Right ventricle myocardium superior (tissue), 1 donor: ENCODE measurements at regions of chr20 and their contacts with region 1.

Region 1: GRCh38 chr20:19205977-19206396 is 6.5 kb upstream of the SLC24A3 start:
- DNase-seq: peak; percentile 85
- ATAC-seq: peak; percentile 83

Region 2: GRCh38 chr20:19125508-19125907 is 80.5 kb before region 1 on chr20:
- intact Hi-C with region 1: no loop called
- DNase-seq: no peak
- ATAC-seq: no peak

Region 3: DNA sequence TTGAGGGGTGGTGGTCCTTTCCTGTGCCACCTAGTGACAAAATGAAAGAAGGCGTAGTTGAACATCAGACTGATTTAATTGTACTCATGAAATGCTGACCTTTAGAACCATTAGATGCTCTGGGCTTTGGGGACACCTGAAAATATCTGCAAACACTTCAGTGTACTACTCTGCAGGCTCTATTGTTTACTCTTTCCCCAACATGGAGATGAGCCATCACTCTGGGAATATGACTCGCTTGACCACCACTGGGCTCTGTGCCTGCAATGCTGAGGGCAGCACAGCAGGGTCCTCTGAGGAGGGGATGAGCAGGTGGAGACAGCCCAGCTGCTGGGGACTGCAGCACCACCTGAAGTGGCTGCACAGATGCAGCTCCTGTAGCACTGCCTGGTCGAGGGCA is 68.3 kb before region 1 on chr20:
- intact Hi-C with region 1: no loop called
- DNase-seq: no peak
- ATAC-seq: no peak

Region 4: DNA sequence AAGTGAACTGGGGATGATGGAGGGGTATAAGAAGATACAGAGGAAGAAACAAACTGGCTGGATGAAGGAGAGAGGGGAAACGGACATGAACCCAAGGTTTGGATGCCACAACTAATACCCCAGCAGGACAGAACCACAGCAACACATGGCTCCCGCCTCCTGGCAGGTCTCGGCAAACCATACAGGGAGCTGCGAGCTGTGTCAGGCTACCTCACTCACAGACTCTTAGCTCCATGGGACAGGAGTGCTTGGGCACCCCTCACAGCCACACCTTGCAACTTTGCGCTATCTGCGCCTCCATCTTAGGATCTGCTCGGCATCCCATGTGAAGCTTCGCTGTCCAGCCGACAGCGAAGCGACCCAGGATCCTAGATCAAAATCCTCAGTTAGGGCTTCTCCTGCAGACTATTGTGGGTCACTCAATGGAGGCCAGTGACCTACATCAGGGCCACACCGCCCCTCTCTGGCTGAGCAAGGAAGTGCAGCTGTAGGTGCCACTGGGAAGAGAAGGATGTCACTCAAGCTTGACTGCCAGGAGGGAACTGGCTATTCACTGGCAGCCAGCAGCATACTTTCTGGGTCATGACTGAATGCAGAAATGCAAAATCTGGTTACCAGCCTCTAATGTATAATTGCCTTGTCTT is 377.7 kb after region 1 on chr20:
- intact Hi-C with region 1: loop called (anchors 5 kb)
- DNase-seq: peak; percentile 79
- ATAC-seq: peak; percentile 93

Region 5: DNA sequence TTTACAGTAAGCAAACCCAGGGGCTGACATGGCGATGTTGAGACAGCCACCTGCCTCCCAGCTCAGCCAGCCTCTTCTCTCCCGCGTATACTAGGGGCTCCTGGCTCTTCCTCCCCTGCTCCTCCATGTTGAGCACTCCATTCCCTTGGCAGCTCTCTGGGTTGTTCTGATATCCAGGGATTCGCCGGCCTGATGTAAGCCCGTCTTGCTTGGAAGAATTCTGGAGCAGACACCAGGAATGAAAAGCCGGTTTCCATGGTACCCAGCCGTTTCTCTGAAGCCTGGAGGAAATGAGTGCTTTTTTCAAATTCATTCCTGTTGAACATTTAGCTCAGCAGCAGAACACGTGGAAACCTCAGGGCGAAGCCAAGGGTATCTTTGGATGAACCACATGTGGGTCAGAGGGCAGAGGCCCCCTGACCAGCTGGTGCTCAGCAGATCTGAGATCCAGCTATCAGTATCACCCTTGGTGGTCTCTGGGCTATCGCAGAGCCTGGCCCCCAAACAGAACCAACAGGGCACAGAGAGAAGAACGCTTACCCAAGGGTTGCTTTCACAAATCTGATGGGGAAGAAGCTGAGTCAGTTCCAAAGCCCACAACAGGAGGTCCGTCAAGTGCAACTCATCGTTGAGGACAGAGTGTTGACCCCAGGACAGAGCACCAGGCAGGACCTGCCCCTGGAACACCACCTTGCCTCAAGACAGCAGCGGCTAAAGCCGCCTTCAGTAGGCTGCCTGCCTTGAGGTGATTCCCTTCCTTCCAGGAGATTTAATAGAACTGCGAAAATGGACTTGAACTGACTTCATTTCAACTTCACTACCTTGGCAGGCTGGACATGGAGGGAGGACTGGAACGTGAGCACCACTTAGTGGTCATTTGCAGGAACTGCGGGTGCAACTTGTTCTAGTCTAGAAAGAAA is 456.0 kb after region 1 on chr20:
- intact Hi-C with region 1: loop called (anchors 5 kb)
- DNase-seq: peak; percentile 62
- ATAC-seq: peak; percentile 85